Activated CD4-positive, alpha-beta T cell treated with anti-CD3 and anti-CD28 coated beads for 36 hours (primary cell): ENCODE measurements at regions of chr5 and their contacts with region 1.

Region 1: GRCh38 chr5:144142139-144142823 is 28.2 kb downstream of the YIPF5 start:
- DNase-seq: no peak
- ATAC-seq: peak; percentile 93
- H3K4me3 Mint-ChIP-seq: no peak overlapping the region
- H3K27ac Mint-ChIP-seq: no peak overlapping the region
- H3K4me1 Mint-ChIP-seq: peaks cover 2% of the 10 kb centered on the region
- H3K27me3 Mint-ChIP-seq: peaks cover 3% of the 10 kb centered on the region

Region 2: DNA sequence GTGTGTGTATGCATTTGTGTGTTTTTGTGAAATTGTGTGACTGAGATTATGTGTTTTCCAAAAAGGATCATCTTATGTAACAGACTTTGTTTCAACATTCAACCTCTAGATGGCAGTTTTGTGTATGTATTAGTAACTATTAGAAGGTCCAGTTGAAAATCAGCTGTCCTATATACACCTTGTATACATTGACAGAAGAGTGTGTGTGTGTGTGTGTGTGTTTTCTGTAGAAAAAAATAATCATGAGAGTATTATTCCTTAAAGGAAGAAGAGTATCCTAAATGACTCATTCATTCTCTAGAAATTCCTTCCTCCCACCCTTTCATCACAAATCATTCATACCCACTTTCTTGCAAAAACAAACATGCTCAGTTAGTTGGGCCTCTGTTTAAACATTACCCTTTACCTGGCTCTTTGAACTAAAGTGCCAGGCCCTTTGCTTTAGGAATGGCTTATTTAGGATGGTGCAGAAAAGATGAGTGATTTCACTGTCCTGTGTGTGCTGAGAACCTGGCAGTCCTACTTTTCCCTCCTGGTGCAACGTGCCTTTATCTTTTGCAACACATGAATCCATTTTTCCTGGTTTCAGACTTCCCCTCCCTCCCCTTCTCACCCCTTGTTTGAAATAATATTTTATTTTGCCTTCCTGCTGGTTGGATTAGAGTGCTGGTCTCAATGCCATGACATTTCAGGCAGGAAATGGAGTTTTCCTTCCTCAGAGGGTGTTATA is 1219.9 kb before region 1 on chr5:
- CTCF ChIA-PET with region 1: no interaction called
- POLR2A ChIA-PET with region 1: no interaction called
- intact Hi-C with region 1: loop called in 1 of 2 experiments (anchors 2 kb)
- DNase-seq: no peak
- ATAC-seq: no peak
- H3K4me3 Mint-ChIP-seq: no peak overlapping the region
- H3K27ac Mint-ChIP-seq: no peak overlapping the region
- H3K4me1 Mint-ChIP-seq: peaks cover 23% of the 10 kb centered on the region
- H3K27me3 Mint-ChIP-seq: no peaks in the 10 kb centered on the region

Region 3: GRCh38 chr5:144260121-144260520 is 117.8 kb after region 1 on chr5:
- CTCF ChIA-PET with region 1: no interaction called
- POLR2A ChIA-PET with region 1: no interaction called
- intact Hi-C with region 1: no loop called
- DNase-seq: no peak
- ATAC-seq: no peak
- H3K4me3 Mint-ChIP-seq: no peak overlapping the region
- H3K27ac Mint-ChIP-seq: no peak overlapping the region
- H3K4me1 Mint-ChIP-seq: no peaks in the 10 kb centered on the region
- H3K27me3 Mint-ChIP-seq: peaks cover 13% of the 10 kb centered on the region

Region 4: DNA sequence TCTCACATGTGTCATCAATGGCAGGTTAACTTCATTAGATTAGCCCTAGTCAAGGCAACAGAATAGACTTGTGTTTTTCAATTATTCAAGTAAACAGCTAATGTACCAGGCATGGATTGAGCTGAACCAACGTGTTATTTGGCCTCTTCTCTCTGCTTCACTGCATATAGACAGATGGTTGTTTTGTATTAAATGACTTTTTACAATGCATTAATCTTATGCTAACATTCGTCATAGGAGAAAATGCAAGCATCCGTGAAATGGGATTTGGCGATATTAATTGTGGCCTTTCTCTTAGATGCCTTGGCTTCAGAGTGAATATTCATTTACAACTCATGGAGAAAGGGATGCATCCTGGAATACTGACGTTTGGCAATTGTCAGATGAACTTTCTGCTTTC is 236.4 kb after region 1 on chr5:
- CTCF ChIA-PET with region 1: no interaction called
- POLR2A ChIA-PET with region 1: no interaction called
- intact Hi-C with region 1: no loop called
- DNase-seq: no peak
- ATAC-seq: no peak
- H3K4me3 Mint-ChIP-seq: no peak overlapping the region
- H3K27ac Mint-ChIP-seq: no peak overlapping the region
- H3K4me1 Mint-ChIP-seq: no peaks in the 10 kb centered on the region
- H3K27me3 Mint-ChIP-seq: peaks cover 2% of the 10 kb centered on the region